Heart right ventricle (tissue), 16 donors: ENCODE measurements at regions of chr1 and their contacts with region 1.

Region 1: GRCh38 chr1:215566556-215567490 is at the start of gene KCTD3:
- DNase-seq: peak; percentile 84 to 87
- ATAC-seq: peak; percentile 91 to 98 (median 94)
- H3K4me3 ChIP-seq: peak within 1 kb of the TSS; percentile 52 to 93 (median 82)
- H3K27ac ChIP-seq: peak within 1 kb of the TSS; percentile 89 to 93 (median 91)
- H3K4me1 ChIP-seq: peaks cover 0 to 42% (median 32%) of the 10 kb centered on the region in 9 donors
- H3K27me3 ChIP-seq: no peaks in the 10 kb centered on the region
- CTCF ChIP-seq: no peak
- total RNA-seq, gene KCTD3: 13.2 to 22.3 (median 16.6) TPM

Region 2: DNA sequence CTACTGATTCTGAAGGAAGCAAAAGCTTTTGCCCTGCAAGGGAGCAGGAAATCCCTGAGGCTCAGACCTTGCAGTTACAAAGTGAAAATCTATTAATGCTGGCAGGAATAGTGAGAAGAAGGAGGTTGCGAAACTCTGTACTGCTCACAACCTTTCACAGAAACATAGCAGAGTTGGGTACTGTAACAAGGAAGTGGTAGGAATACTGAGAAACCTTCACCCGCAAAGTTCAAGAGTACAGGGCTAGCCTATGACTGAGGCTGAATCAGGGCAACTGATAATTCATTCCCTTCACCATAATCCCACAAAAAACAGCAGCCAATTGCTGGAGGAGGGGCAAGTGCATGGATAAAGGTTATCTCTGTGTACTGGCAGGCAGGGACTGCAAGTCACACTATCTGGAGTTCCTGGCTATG is 23.6 kb before region 1 on chr1:
- intact Hi-C with region 1: no loop called
- DNase-seq: no peak
- ATAC-seq: peak in 1 of 8 donors; percentile 48
- H3K4me3 ChIP-seq: no peak overlapping the region
- H3K27ac ChIP-seq: no peak overlapping the region
- H3K4me1 ChIP-seq: peaks cover 0 to 9% (median 0%) of the 10 kb centered on the region in 9 donors
- H3K27me3 ChIP-seq: no peaks in the 10 kb centered on the region
- CTCF ChIP-seq: no peak

Region 3: GRCh38 chr1:215599418-215600074 is 32.7 kb after region 1 on chr1:
- intact Hi-C with region 1: loop called in 1 of 10 experiments (anchors 5 kb)
- DNase-seq: no peak
- ATAC-seq: peak in 4 of 8 donors; percentile 42 to 70 (median 64)
- H3K4me3 ChIP-seq: no peak overlapping the region
- H3K27ac ChIP-seq: peak overlapping the region in 1 of 10 donors; percentile 22
- H3K4me1 ChIP-seq: peaks cover 0 to 24% (median 10%) of the 10 kb centered on the region in 9 donors
- H3K27me3 ChIP-seq: no peaks in the 10 kb centered on the region
- CTCF ChIP-seq: no peak

Region 4: GRCh38 chr1:215606564-215607168 is 39.8 kb after region 1 on chr1:
- intact Hi-C with region 1: loop called in 2 of 10 experiments (anchors 5 kb)
- DNase-seq: no peak
- ATAC-seq: no peak
- H3K4me3 ChIP-seq: no peak overlapping the region
- H3K27ac ChIP-seq: no peak overlapping the region
- H3K4me1 ChIP-seq: peaks cover 0 to 6% (median 4%) of the 10 kb centered on the region in 9 donors
- H3K27me3 ChIP-seq: no peaks in the 10 kb centered on the region
- CTCF ChIP-seq: peak; percentile 19 to 65 (median 49)